Activated T-helper 2 cell treated with anti-CD3 and anti-CD28 coated beads, Interferon-gamma antibody, Interleukin-2, Interleukin-4, amounts not matched to agents 10 μg/mL and 5 μg/mL and 100 μg/mL, durations not matched to agents 14 hours and 24 hours and 36 hours (primary cell): ENCODE measurements at regions of chr22 and their contacts with region 1.

Region 1: DNA sequence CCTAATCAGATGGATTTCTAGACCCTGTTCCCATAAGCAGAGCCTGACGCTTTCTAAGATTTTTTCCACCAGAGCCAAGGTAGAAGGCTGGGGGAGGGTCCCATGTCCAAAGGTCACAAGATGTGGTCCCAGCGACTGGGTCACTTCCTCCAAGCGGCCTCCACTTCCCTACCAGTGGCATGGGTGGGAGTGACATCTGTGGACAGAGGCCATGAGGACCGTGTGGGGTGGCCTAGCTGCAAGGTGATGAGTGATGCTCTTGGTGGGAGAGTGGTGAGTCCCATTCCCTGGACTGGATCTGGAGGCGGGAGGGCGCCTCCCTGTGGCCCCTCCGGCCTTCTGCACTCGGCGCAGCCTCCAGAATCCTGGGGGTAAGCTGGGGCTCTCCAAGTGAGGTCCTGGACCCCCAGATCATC is 32.4 kb upstream of the PRR5 start:
- DNase-seq: no peak
- H3K4me3 Mint-ChIP-seq: peak overlapping the region; percentile 81
- H3K27ac Mint-ChIP-seq: peak overlapping the region; percentile 78
- H3K4me1 Mint-ChIP-seq: peaks cover 43% of the 10 kb centered on the region
- H3K27me3 Mint-ChIP-seq: peaks cover 1% of the 10 kb centered on the region

Region 2: DNA sequence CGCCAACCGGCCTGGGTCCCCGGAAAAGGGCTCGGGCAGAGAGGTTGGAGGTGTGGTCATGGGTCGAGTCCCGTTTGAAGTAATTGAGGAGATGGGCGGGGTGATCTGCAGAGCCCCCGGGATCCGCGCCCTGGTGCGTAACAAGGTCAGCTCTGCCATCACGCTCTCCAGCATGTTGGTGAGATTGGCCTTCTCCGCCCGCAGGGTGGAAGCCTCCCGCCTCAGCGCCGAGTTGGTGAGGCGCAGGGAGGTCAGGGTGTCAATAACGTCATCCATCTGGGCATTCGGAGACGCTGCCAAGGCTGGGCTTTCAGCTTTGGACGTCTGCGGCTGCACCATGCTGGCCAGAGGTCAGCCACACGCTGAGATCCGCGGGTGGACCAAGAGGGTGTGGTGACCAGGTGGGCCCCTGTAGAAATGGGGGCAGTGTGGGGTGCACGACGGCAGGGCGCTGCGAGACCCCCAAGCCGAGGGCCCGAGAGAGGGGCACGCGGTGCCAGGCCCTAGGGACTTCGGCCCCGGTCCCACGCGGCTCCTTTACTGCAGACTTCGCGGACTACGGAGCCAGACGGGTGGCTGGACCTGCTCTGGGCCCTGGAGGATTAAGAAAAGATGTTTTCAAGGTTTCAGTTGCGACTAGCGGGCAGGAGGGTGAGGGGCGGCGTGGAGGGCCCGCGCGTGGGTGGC is 172.2 kb before region 1 on chr22:
- intact Hi-C with region 1: loop called (anchors 2 kb)
- DNase-seq: no peak
- H3K4me3 Mint-ChIP-seq: peak overlapping the region; percentile 73
- H3K27ac Mint-ChIP-seq: peak overlapping the region; percentile 63
- H3K4me1 Mint-ChIP-seq: peaks cover 19% of the 10 kb centered on the region
- H3K27me3 Mint-ChIP-seq: peaks cover 2% of the 10 kb centered on the region

Region 3: DNA sequence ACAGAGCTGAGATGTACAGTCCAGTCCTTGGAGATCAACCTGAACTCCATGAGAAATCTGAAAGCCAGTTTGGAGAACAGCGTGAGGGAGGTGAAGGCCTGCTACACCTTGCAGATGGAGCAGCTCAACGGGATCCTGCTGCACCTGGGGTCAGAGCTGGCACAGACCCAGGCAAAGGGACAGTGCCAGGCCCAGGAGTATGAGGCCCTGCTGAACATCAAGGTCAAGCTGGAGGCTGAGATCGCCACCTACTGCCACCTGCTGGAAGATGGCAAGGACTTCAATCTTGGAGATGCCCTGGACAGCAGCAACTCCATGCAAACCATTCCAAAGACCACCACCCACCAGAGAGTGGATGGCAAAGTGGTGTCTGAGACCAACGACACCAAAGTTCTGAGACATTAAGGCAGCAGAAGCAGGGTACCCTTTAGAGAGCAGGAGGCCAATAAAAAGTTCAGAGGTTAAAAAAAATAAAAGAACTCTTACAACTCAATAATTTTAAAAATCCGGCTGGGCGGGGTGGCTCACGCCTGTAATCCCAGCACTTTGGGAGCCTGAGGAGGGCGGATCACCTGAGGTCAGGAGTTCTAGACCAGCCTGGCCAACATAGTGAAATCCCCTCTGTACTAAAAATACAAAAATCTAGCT is 101.6 kb before region 1 on chr22:
- intact Hi-C with region 1: no loop called
- DNase-seq: peak; percentile 28
- H3K4me3 Mint-ChIP-seq: no peak overlapping the region
- H3K27ac Mint-ChIP-seq: no peak overlapping the region
- H3K4me1 Mint-ChIP-seq: no peaks in the 10 kb centered on the region
- H3K27me3 Mint-ChIP-seq: peaks cover 13% of the 10 kb centered on the region

Region 4: GRCh38 chr22:44683237-44683636 is 13.7 kb after region 1 on chr22:
- intact Hi-C with region 1: loop called (anchors 1 kb)
- DNase-seq: peak; percentile 54
- H3K4me3 Mint-ChIP-seq: peak overlapping the region; percentile 39
- H3K27ac Mint-ChIP-seq: peak overlapping the region; percentile 80
- H3K4me1 Mint-ChIP-seq: peaks cover 54% of the 10 kb centered on the region
- H3K27me3 Mint-ChIP-seq: no peaks in the 10 kb centered on the region